MCF 10A (cell line): ENCODE measurements at regions of chr1 and their contacts with region 1.

Region 1: GRCh38 chr1:218339267-218339831 is 5.8 kb upstream of the TGFB2 start:
- DNase-seq: peak; percentile 71
- H3K4me3 Mint-ChIP-seq: no peak overlapping the region
- H3K27ac Mint-ChIP-seq: no peak overlapping the region
- H3K4me1 Mint-ChIP-seq: no peaks in the 10 kb centered on the region
- H3K27me3 Mint-ChIP-seq: no peaks in the 10 kb centered on the region
- CTCF ChIP-seq: peak; percentile 90

Region 2: DNA sequence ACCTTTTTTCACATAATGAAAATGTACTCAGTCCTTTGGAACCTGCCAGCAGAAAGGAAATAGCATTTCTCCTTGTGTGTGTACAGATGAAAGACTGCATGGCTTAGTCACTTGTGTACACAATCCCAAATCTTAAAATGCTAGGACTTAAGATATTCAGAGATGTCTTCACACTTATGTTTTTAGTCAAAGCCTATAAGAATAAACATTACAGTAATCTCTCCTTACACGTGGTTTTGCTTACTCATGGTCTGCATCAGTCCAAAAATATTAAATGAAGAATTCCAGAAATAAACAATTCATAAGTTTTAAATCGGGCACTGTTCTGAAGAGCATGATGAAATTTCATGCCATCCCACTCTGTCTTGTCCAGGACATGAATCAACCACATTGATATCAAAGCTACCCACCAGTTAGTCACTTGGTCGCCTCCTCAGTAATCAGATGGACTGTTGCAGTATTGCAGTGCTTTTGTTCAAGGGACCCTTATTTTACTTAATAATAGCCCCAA is 129.9 kb before region 1 on chr1:
- CTCF ChIA-PET with region 1: no interaction called
- POLR2A ChIA-PET with region 1: no interaction called
- intact Hi-C with region 1: no loop called
- DNase-seq: peak; percentile 67
- H3K4me3 Mint-ChIP-seq: no peak overlapping the region
- H3K27ac Mint-ChIP-seq: peak overlapping the region; percentile 67
- H3K4me1 Mint-ChIP-seq: peaks cover 24% of the 10 kb centered on the region
- H3K27me3 Mint-ChIP-seq: peaks cover 30% of the 10 kb centered on the region
- CTCF ChIP-seq: no peak

Region 3: GRCh38 chr1:218521375-218522169 is 182.2 kb after region 1 on chr1:
- CTCF ChIA-PET with region 1: interaction called, 8 read pairs
- POLR2A ChIA-PET with region 1: no interaction called
- intact Hi-C with region 1: loop called (anchors 1 kb)
- DNase-seq: peak; percentile 92
- H3K4me3 Mint-ChIP-seq: no peak overlapping the region
- H3K27ac Mint-ChIP-seq: no peak overlapping the region
- H3K4me1 Mint-ChIP-seq: peaks cover 13% of the 10 kb centered on the region
- H3K27me3 Mint-ChIP-seq: no peaks in the 10 kb centered on the region
- CTCF ChIP-seq: peak; percentile 90

Region 4: DNA sequence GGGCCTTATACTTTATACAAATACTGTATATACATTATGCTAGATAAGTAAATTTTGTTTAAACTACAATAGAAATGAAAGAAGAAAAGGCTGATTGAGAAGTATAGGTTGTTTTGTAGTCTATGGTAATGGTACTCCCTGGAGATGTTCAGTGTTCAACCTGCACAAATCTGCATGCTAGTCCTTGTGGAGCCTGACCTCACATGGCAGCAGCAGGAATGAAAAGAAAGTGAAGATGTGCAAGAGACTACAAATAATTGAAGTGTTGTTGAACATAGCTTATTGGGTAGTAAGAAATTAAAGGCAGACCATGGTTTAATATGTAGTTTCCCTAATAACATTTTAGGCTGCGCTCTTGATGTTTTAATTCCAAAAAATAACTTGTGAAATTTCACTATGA is 207.0 kb after region 1 on chr1:
- CTCF ChIA-PET with region 1: interaction called, 9 read pairs
- POLR2A ChIA-PET with region 1: interaction called, 3 read pairs
- intact Hi-C with region 1: loop called (anchors 1 kb)
- DNase-seq: peak; percentile 42
- H3K4me3 Mint-ChIP-seq: no peak overlapping the region
- H3K27ac Mint-ChIP-seq: no peak overlapping the region
- H3K4me1 Mint-ChIP-seq: no peaks in the 10 kb centered on the region
- H3K27me3 Mint-ChIP-seq: no peaks in the 10 kb centered on the region
- CTCF ChIP-seq: peak; percentile 46

Region 5: DNA sequence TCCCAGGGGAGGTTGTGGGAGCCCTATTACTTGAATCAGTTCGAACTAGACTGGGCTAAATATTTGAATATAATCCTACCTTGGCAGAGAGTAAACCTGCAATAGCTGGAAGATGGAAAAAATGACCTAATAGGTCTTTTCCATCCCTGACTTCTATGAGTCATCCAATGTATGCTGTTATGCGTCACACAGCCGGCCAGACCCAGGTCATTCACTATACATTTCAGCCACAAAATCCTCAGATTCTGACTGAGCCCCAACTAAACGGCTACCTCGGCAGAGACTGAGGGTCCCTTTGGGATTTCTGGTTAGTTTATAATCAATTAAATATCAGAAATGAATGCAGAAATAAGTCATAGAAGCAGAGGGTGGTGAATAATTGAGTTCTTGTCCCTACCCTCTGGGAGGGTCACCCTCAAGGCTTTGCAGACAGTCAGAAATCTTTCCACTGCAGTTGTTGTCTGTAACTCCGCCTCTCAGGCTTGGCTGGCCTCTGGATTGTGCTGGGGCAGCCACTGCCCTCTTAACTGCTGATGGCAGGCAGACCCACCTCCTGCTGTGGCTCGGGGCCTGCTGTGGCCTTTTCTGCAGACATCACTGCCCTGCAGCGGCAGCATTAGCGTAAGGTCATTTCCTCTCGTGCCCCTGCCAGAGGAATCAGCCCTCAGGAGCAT is 246.3 kb after region 1 on chr1:
- CTCF ChIA-PET with region 1: interaction called, 7 read pairs
- POLR2A ChIA-PET with region 1: interaction called, 4 read pairs
- intact Hi-C with region 1: loop called (anchors 2 kb)
- DNase-seq: peak; percentile 95
- H3K4me3 Mint-ChIP-seq: no peak overlapping the region
- H3K27ac Mint-ChIP-seq: peak overlapping the region; percentile 81
- H3K4me1 Mint-ChIP-seq: peaks cover 26% of the 10 kb centered on the region
- H3K27me3 Mint-ChIP-seq: no peaks in the 10 kb centered on the region
- CTCF ChIP-seq: no peak